ENCODE measurements at regions of chr6 and their contacts with region 1.

Region 1: GRCh38 chr6:89080542-89081422 is at the start of gene PNRC1:
- DNase-seq: peak; percentile 99 to 100 (median 100)
- H3K4me3 ChIP-seq: peak within 1 kb of the TSS; percentile 79 to 100
- H3K4me3 Mint-ChIP-seq: peak within 1 kb of the TSS; percentile 91 to 99 (median 94)
- H3K27ac ChIP-seq: peak within 1 kb of the TSS; percentile 99
- H3K27ac Mint-ChIP-seq: peak within 1 kb of the TSS; percentile 96 to 100 (median 99)
- H3K4me1 ChIP-seq: peaks cover 48% of the 10 kb centered on the region
- H3K4me1 Mint-ChIP-seq: peaks cover 26 to 67% (median 39%) of the 10 kb centered on the region in 4 donors
- H3K27me3 ChIP-seq: no peaks in the 10 kb centered on the region
- H3K27me3 Mint-ChIP-seq: peaks cover 0 to 3% of the 10 kb centered on the region in 2 donors
- total RNA-seq, gene PNRC1: 622 to 667 TPM

Region 2: GRCh38 chr6:87154993-87155841 is 1925.6 kb before region 1 on chr6 and contains the start of gene ZNF292:
- CTCF ChIA-PET with region 1: no interaction called
- POLR2A ChIA-PET with region 1: interaction called, 3 read pairs
- intact Hi-C with region 1: loop called (anchors 10 kb)
- DNase-seq: peak; percentile 92 to 96 (median 93)
- H3K4me3 ChIP-seq: peak within 1 kb of the TSS; percentile 54 to 93
- H3K4me3 Mint-ChIP-seq: peak within 1 kb of the TSS; percentile 91 to 100 (median 96)
- H3K27ac ChIP-seq: peak within 1 kb of the TSS; percentile 91
- H3K27ac Mint-ChIP-seq: peak within 1 kb of the TSS; percentile 92 to 99 (median 96)
- H3K4me1 ChIP-seq: peaks cover 73% of the 10 kb centered on the region
- H3K4me1 Mint-ChIP-seq: peaks cover 38 to 70% (median 51%) of the 10 kb centered on the region in 4 donors
- H3K27me3 ChIP-seq: no peaks in the 10 kb centered on the region
- H3K27me3 Mint-ChIP-seq: no peaks in the 10 kb centered on the region
- total RNA-seq, gene ZNF292: 74.8 to 82.1 TPM

Region 3: GRCh38 chr6:88982720-88983119 is 98.1 kb before region 1 on chr6:
- CTCF ChIA-PET with region 1: interaction called, 38 read pairs
- POLR2A ChIA-PET with region 1: interaction called, 32 read pairs
- intact Hi-C with region 1: loop called (anchors 1 kb)
- DNase-seq: peak in 4 of 5 donors; percentile 55 to 66 (median 62)
- H3K4me3 ChIP-seq: no peak overlapping the region
- H3K4me3 Mint-ChIP-seq: no peak overlapping the region
- H3K27ac ChIP-seq: no peak overlapping the region
- H3K27ac Mint-ChIP-seq: no peak overlapping the region
- H3K4me1 ChIP-seq: no peaks in the 10 kb centered on the region
- H3K4me1 Mint-ChIP-seq: no peaks in the 10 kb centered on the region
- H3K27me3 ChIP-seq: no peaks in the 10 kb centered on the region
- H3K27me3 Mint-ChIP-seq: no peaks in the 10 kb centered on the region

Region 4: DNA sequence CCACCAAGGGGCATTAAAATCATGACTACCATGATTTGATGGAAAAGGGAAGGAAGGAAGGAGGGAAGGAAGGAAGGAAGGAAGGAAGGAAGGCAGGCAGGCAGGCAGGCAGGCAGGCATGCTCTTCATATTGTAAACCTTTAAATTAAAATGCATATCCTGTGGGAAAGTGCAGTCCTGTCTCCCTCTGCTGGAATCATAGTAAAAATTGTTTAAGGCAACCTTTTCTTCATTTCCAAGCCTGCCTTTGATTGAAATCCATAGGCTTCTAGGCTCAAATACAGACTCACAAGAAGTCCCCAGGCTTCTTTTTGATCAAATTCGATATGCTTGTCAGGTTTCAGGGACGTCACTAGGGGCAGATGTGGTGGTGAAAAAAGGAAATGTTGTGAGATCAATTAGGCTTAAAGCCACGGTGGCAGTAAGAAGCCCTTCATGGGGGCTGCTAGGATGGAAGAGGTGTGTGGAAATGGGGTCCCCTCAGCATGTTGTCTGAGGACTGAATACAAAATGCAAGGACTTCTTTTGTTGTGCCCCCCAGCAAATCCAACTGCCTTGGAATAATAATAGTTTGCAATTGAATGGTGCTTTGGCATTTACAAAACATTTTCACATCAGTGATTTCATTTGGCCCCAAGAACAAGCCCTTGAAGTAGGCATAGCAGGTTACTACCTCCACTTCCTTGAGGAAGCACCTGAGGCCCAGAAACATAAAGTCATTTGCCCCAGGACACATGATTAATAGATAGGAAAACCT is 162.0 kb after region 1 on chr6:
- CTCF ChIA-PET with region 1: interaction called, 3 read pairs
- POLR2A ChIA-PET with region 1: interaction called, 3 read pairs
- intact Hi-C with region 1: loop called (anchors 2 kb)
- DNase-seq: peak in 4 of 5 donors; percentile 16 to 30 (median 24)
- H3K4me3 ChIP-seq: no peak overlapping the region
- H3K4me3 Mint-ChIP-seq: no peak overlapping the region
- H3K27ac ChIP-seq: no peak overlapping the region
- H3K27ac Mint-ChIP-seq: no peak overlapping the region
- H3K4me1 ChIP-seq: peaks cover 10% of the 10 kb centered on the region
- H3K4me1 Mint-ChIP-seq: peaks cover 9 to 16% (median 12%) of the 10 kb centered on the region in 4 donors
- H3K27me3 ChIP-seq: peaks cover 5% of the 10 kb centered on the region
- H3K27me3 Mint-ChIP-seq: peaks cover 2 to 4% of the 10 kb centered on the region in 2 donors

Region 5: GRCh38 chr6:89371849-89372505 is 291.2 kb after region 1 on chr6:
- CTCF ChIA-PET with region 1: interaction called, 10 read pairs
- POLR2A ChIA-PET with region 1: interaction called, 6 read pairs
- intact Hi-C with region 1: no loop called
- DNase-seq: peak; percentile 64 to 70 (median 69)
- H3K4me3 ChIP-seq: no peak overlapping the region
- H3K4me3 Mint-ChIP-seq: no peak overlapping the region
- H3K27ac ChIP-seq: no peak overlapping the region
- H3K27ac Mint-ChIP-seq: peak overlapping the region in 5 of 7 donors; percentile 24 to 73 (median 56)
- H3K4me1 ChIP-seq: peaks cover 28% of the 10 kb centered on the region
- H3K4me1 Mint-ChIP-seq: peaks cover 16 to 25% (median 23%) of the 10 kb centered on the region in 4 donors
- H3K27me3 ChIP-seq: no peaks in the 10 kb centered on the region
- H3K27me3 Mint-ChIP-seq: no peaks in the 10 kb centered on the region

Region 6: DNA sequence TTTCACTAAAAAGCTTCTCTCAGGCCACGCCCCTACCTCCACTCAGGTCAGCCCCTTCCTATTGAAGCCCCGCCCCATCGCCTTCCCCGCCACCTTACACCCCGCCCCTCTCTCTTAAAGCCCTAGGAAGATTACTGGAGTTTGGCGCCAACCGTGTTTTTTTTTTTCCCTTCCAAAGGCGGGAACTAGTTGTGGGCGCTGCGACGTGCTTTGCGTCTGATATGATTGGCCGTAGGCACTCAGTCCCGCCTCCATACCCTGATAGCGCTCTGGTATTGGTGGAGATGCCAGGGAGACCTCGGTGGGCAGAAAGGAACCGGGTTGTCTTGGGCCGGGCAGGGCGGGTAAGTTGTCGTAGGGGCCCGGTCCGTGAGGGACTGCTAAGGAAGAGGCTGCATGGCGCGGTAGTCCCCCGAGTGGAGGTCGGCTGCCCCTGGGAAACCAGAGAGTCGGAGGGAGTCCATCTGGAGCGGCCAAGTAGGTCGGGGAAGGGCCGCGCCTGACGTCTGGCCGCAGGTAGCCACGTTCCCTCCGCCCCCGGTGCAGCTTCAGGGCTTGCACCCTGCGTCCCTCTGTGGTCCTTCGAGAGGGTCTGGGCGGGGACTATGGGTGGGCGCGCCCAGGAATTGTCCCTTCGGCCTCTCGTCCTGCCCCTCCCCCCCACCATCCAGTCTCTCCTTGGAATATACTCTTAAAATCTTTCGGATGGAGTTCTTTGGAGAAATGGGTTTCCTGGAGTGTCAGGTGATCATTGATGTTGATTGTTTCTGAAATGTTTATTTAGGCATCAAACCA is 749.0 kb after region 1 on chr6 and contains the start of gene CASP8AP2:
- CTCF ChIA-PET with region 1: no interaction called
- POLR2A ChIA-PET with region 1: interaction called, 3 read pairs
- intact Hi-C with region 1: loop called (anchors 2 kb)
- DNase-seq: peak; percentile 93 to 98 (median 98)
- H3K4me3 ChIP-seq: peak within 1 kb of the TSS; percentile 85 to 86
- H3K4me3 Mint-ChIP-seq: peak within 1 kb of the TSS; percentile 98 to 100 (median 99)
- H3K27ac ChIP-seq: peak within 1 kb of the TSS; percentile 74
- H3K27ac Mint-ChIP-seq: peak within 1 kb of the TSS; percentile 79 to 99 (median 97)
- H3K4me1 ChIP-seq: peaks cover 32% of the 10 kb centered on the region
- H3K4me1 Mint-ChIP-seq: peaks cover 17 to 52% (median 37%) of the 10 kb centered on the region in 4 donors
- H3K27me3 ChIP-seq: no peaks in the 10 kb centered on the region
- H3K27me3 Mint-ChIP-seq: no peaks in the 10 kb centered on the region
- total RNA-seq, gene CASP8AP2: 59.4 to 61.7 TPM

Region 7: GRCh38 chr6:90586836-90587638 is 1506.3 kb after region 1 on chr6 and contains the start of gene MAP3K7:
- CTCF ChIA-PET with region 1: no interaction called
- POLR2A ChIA-PET with region 1: interaction called, 5 read pairs
- intact Hi-C with region 1: loop called (anchors 1 kb)
- DNase-seq: peak; percentile 93 to 94 (median 94)
- H3K4me3 ChIP-seq: peak within 1 kb of the TSS; percentile 80 to 82
- H3K4me3 Mint-ChIP-seq: peak within 1 kb of the TSS; percentile 95 to 98 (median 97)
- H3K27ac ChIP-seq: peak within 1 kb of the TSS; percentile 97
- H3K27ac Mint-ChIP-seq: peak within 1 kb of the TSS; percentile 97 to 100 (median 99)
- H3K4me1 ChIP-seq: peaks cover 38% of the 10 kb centered on the region
- H3K4me1 Mint-ChIP-seq: peaks cover 29 to 43% (median 36%) of the 10 kb centered on the region in 4 donors
- H3K27me3 ChIP-seq: no peaks in the 10 kb centered on the region
- H3K27me3 Mint-ChIP-seq: peaks cover 2 to 12% of the 10 kb centered on the region in 2 donors
- total RNA-seq, gene MAP3K7: 33.6 to 34.1 TPM